ENCODE measurements at regions of chr16 and their contacts with region 1.

Region 1: GRCh38 chr16:4253394-4254150 is 11.7 kb upstream of the SRL start:
- DNase-seq: peak; percentile 91
- H3K4me3 ChIP-seq: peak overlapping the region; percentile 64
- H3K27me3 ChIP-seq: no peaks in the 10 kb centered on the region
- CTCF ChIP-seq: no peak

Region 2: GRCh38 chr16:3983081-3983520 is 270.5 kb before region 1 on chr16:
- CTCF ChIA-PET with region 1: interaction called, 42 read pairs
- POLR2A ChIA-PET with region 1: interaction called, 3 read pairs
- DNase-seq: no peak
- H3K4me3 ChIP-seq: no peak overlapping the region
- H3K27me3 ChIP-seq: no peaks in the 10 kb centered on the region
- CTCF ChIP-seq: peak; percentile 84

Region 3: DNA sequence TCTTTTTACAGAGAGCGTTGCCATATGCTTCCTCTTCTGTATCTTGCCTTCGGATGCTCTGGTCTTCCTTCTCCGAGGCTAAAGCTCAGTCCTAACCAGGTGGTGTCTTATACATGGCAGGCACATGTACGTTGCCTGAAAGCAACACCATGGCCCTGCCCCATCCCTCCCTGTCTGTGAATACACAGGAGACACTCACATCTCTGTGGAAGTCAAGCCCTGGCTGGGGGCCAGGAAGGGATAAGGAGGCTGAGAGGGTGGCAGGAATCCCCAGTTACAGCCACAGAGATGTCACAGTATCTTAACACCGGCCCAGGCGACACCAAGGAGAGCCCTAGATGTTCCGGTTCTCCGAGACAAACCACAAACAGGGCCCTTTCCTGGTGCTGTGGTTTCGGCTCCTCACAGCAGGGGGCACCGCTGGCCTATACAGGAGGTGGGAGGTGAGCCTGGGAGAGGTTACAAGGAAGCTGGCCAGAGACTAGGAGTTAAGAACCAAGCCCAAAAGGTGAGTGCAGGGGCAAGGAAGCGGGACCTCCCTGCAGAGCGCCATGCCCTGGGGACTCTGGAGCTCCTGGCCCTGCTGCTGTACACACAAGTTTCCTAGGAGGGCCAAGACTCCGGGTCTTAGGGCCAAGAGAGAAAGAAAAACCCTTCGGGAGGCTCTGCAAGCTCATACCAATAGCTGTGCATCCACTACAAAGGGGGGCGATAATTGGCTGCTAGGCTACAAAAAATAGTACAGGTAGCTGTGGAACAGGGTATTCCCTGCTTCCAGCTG is 53.4 kb before region 1 on chr16:
- CTCF ChIA-PET with region 1: interaction called, 76 read pairs
- POLR2A ChIA-PET with region 1: no interaction called
- DNase-seq: peak; percentile 7
- H3K4me3 ChIP-seq: no peak overlapping the region
- H3K27me3 ChIP-seq: no peaks in the 10 kb centered on the region
- CTCF ChIP-seq: peak; percentile 77

Region 4: GRCh38 chr16:4232541-4233386 is 20.8 kb before region 1 on chr16:
- CTCF ChIA-PET with region 1: interaction called, 11 read pairs
- POLR2A ChIA-PET with region 1: no interaction called
- DNase-seq: no peak
- H3K4me3 ChIP-seq: no peak overlapping the region
- H3K27me3 ChIP-seq: no peaks in the 10 kb centered on the region
- CTCF ChIP-seq: no peak

Region 5: GRCh38 chr16:4330277-4330874 is 76.8 kb after region 1 on chr16:
- CTCF ChIA-PET with region 1: interaction called, 31 read pairs
- POLR2A ChIA-PET with region 1: no interaction called
- DNase-seq: no peak
- H3K4me3 ChIP-seq: no peak overlapping the region
- H3K27me3 ChIP-seq: no peaks in the 10 kb centered on the region
- CTCF ChIP-seq: peak; percentile 98

Measured in BJ (cell line).